OCI-LY7 (cell line): ENCODE measurements at regions of chr1 and their contacts with region 1.

Region 1: DNA sequence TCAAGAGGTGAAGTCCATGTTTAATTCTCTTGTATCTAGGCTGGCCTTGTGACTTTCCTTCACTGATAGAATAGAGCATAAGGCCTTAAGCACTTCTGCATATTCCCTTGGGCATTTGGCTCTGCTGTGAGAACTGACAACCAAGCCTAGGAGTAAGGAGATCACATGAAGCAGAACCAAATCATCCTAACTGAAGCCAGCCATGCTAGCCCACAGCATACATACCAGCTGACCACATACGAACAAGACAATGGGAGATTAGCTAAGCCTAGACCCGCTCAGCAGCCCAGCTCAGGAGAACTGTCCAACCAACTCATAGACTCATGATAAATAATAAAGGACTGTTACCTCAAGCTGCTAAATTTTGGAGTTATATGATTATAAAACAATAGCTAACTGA is 114.6 kb upstream of the NEK7 start:
- DNase-seq: no peak
- H3K4me3 ChIP-seq: no peak overlapping the region
- H3K27ac ChIP-seq: no peak overlapping the region
- H3K4me1 ChIP-seq: no peaks in the 10 kb centered on the region
- CTCF ChIP-seq: no peak

Region 2: GRCh38 chr1:198024782-198025181 is 17.4 kb before region 1 on chr1:
- CTCF ChIA-PET with region 1: no interaction called
- POLR2A ChIA-PET with region 1: interaction called, 12 read pairs
- intact Hi-C with region 1: no loop called
- DNase-seq: no peak
- H3K4me3 ChIP-seq: no peak overlapping the region
- H3K27ac ChIP-seq: no peak overlapping the region
- H3K4me1 ChIP-seq: no peaks in the 10 kb centered on the region
- CTCF ChIP-seq: no peak

Region 3: GRCh38 chr1:198056255-198056654 is 14.1 kb after region 1 on chr1:
- CTCF ChIA-PET with region 1: no interaction called
- POLR2A ChIA-PET with region 1: no interaction called
- intact Hi-C with region 1: no loop called
- DNase-seq: peak; percentile 14
- H3K4me3 ChIP-seq: no peak overlapping the region
- H3K27ac ChIP-seq: no peak overlapping the region
- H3K4me1 ChIP-seq: no peaks in the 10 kb centered on the region
- CTCF ChIP-seq: peak; percentile 61

Region 4: GRCh38 chr1:198132060-198132781 is 90.1 kb after region 1 on chr1:
- CTCF ChIA-PET with region 1: no interaction called
- POLR2A ChIA-PET with region 1: no interaction called
- intact Hi-C with region 1: no loop called
- DNase-seq: no peak
- H3K4me3 ChIP-seq: no peak overlapping the region
- H3K27ac ChIP-seq: no peak overlapping the region
- H3K4me1 ChIP-seq: no peaks in the 10 kb centered on the region
- CTCF ChIP-seq: no peak